ENCODE measurements at regions of chr14 and their contacts with region 1.

Region 1: DNA sequence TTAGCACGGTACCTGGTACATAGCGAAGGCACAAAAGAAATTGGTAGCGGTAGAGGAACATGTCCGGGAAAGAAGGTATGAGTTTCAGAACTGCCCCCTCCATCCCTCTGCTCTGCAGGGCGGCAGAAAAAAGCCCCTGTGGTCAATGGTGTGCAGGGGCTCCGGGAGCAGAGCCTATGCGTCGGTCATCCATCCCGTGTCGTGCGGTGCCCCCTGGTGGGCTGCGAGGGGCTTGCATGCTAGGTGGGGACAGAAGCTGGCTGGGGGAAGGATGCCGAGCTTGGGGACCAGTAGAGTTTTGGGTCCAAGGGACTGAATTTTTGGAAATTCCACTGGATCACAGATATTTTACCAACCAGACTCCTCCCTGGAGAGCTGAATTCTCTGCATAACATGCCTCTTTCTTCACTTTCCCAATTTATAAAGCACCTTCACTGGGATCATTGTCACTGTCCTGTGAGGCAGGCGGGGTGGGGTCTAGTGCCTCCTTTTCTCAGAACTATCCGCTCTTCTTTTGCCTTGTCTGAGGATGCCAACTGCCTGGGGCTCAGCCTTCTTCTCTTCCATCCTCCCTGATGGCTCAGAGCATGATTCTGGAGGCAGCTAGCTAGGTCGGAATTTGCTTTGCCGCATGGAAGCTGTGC is 148.7 kb downstream of the SMOC1 start:
- DNase-seq: peak in 8 of 9 donors; percentile 18 to 74 (median 38)
- ATAC-seq: peak; percentile 61
- H3K4me3 ChIP-seq: no peak overlapping the region
- H3K4me3 Mint-ChIP-seq: no peak overlapping the region
- H3K27ac ChIP-seq: no peak overlapping the region
- H3K27ac Mint-ChIP-seq: no peak overlapping the region
- H3K4me1 ChIP-seq: no peaks in the 10 kb centered on the region
- H3K4me1 Mint-ChIP-seq: peaks cover 0 to 4% (median 0%) of the 10 kb centered on the region in 7 donors
- H3K27me3 ChIP-seq: no peaks in the 10 kb centered on the region
- H3K27me3 Mint-ChIP-seq: peaks cover 3 to 7% (median 6%) of the 10 kb centered on the region in 5 donors

Region 2: DNA sequence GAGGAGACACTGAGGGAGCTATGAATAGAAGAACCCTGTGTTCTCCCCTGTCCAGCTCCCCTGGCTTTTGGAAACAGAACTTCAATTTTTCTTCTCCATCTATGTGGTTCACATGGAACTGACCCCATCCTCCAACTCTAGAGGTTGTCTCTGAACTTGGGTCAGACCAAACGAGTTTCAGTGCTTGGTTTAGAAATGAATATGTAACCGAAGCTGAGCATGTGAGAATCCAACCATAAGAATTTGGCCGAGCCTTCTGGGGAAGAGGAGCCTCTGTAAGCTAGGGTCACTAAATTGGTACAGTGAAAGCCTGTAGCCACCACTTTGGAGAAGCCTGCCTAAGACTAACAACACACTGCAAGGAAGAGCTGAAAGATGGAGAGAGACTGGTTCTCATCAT is 1699.4 kb before region 1 on chr14:
- CTCF ChIA-PET with region 1: no interaction called
- POLR2A ChIA-PET with region 1: no interaction called
- intact Hi-C with region 1: no loop called
- DNase-seq: no peak
- ATAC-seq: no peak
- H3K4me3 ChIP-seq: no peak overlapping the region
- H3K4me3 Mint-ChIP-seq: no peak overlapping the region
- H3K27ac ChIP-seq: no peak overlapping the region
- H3K27ac Mint-ChIP-seq: no peak overlapping the region
- H3K4me1 ChIP-seq: no peaks in the 10 kb centered on the region
- H3K4me1 Mint-ChIP-seq: peaks cover 0 to 9% (median 8%) of the 10 kb centered on the region in 7 donors
- H3K27me3 ChIP-seq: no peaks in the 10 kb centered on the region
- H3K27me3 Mint-ChIP-seq: no peaks in the 10 kb centered on the region

Region 3: DNA sequence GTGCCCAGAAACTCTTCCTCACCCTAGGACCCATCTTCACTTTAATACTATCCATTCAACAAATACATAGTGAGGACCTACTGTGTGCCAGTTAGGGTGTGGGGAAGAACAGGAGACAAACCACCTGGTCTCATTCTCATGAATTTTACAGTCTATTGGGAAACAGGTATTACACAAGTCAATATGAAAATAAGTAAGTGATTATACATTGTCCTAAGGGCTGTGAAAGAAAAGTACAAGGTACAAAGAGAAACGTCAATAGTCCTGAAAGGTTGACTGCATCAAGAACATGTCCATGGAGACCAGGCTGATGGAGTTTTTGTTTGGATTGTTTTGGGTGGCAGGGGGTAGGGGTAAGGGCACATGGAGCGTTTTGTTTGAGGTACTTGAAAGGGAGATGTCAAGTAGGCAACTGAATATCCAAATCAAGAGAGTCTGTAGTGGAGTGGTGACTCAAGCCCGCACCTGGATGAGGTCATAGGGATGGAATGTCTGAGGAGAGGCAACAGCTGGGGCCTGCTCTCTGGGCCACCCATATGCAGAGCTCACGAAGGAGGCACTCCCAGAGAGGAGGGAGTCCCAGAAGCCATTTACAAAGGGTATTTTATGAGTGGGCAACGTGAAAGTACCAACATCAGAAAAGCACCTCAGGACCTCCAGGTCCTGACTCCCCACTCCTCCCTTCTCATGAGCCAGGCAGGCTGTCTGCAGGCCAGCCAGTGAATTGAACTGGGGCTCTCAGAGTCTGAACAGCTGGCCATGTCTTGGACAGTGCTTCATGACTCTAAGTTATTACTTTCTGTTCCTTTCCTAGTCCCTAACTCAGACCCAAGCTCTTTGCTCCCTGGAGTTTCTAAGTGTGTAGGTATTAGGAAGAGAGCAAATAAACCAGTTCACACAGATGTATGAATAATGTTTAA is 1507.0 kb before region 1 on chr14:
- CTCF ChIA-PET with region 1: no interaction called
- POLR2A ChIA-PET with region 1: no interaction called
- intact Hi-C with region 1: no loop called
- DNase-seq: no peak
- ATAC-seq: no peak
- H3K4me3 ChIP-seq: no peak overlapping the region
- H3K4me3 Mint-ChIP-seq: no peak overlapping the region
- H3K27ac ChIP-seq: no peak overlapping the region
- H3K27ac Mint-ChIP-seq: peak overlapping the region in 3 of 9 donors; percentile 49 to 69 (median 66)
- H3K4me1 ChIP-seq: peaks cover 0 to 24% of the 10 kb centered on the region in 2 donors
- H3K4me1 Mint-ChIP-seq: peaks cover 5 to 52% (median 37%) of the 10 kb centered on the region in 7 donors
- H3K27me3 ChIP-seq: no peaks in the 10 kb centered on the region
- H3K27me3 Mint-ChIP-seq: no peaks in the 10 kb centered on the region

Region 4: DNA sequence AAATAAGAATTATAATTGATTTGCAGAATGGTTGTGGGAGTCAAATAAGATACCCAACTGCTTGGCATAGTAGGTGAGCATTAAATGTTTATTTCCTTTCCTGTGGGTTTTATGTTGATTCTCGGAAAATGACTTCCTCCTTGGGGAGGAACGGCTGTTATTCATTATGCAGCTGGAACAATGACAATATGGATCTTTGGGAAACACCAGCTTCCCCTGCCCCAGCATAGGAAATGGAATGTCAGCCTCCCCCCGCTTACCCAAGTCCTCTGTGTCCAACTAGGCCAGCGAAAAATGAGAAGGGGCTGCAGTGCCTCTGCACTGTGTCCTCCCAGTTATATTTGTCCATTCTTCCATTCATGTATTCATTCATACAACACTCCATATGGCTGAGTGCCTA is 441.5 kb before region 1 on chr14:
- CTCF ChIA-PET with region 1: no interaction called
- POLR2A ChIA-PET with region 1: no interaction called
- intact Hi-C with region 1: loop called (anchors 5 kb)
- DNase-seq: no peak
- ATAC-seq: no peak
- H3K4me3 ChIP-seq: no peak overlapping the region
- H3K4me3 Mint-ChIP-seq: no peak overlapping the region
- H3K27ac ChIP-seq: no peak overlapping the region
- H3K27ac Mint-ChIP-seq: no peak overlapping the region
- H3K4me1 ChIP-seq: no peaks in the 10 kb centered on the region
- H3K4me1 Mint-ChIP-seq: peaks cover 0 to 7% (median 0%) of the 10 kb centered on the region in 7 donors
- H3K27me3 ChIP-seq: no peaks in the 10 kb centered on the region
- H3K27me3 Mint-ChIP-seq: peaks cover 0 to 9% (median 0%) of the 10 kb centered on the region in 5 donors

Region 5: GRCh38 chr14:69879175-69880043 is 148.5 kb before region 1 on chr14 and contains the start of gene SMOC1:
- CTCF ChIA-PET with region 1: no interaction called
- POLR2A ChIA-PET with region 1: no interaction called
- intact Hi-C with region 1: loop called in 1 of 2 experiments (anchors 2 kb)
- DNase-seq: no peak
- ATAC-seq: no peak
- H3K4me3 ChIP-seq: no peak within 1 kb of the TSS
- H3K4me3 Mint-ChIP-seq: peak within 1 kb of the TSS in 2 of 10 donors; percentile 51 to 58
- H3K27ac ChIP-seq: no peak within 1 kb of the TSS
- H3K27ac Mint-ChIP-seq: no peak within 1 kb of the TSS
- H3K4me1 ChIP-seq: no peaks in the 10 kb centered on the region
- H3K4me1 Mint-ChIP-seq: peaks cover 0 to 7% (median 0%) of the 10 kb centered on the region in 7 donors
- H3K27me3 ChIP-seq: peaks cover 0 to 4% of the 10 kb centered on the region in 2 donors
- H3K27me3 Mint-ChIP-seq: peaks cover 43 to 71% (median 55%) of the 10 kb centered on the region in 5 donors
- total RNA-seq, gene SMOC1: 0.71 TPM in 1 of 5 experiments, not detected in the others

Region 6: GRCh38 chr14:69980457-69981425 is 47.2 kb before region 1 on chr14:
- CTCF ChIA-PET with region 1: no interaction called
- POLR2A ChIA-PET with region 1: no interaction called
- intact Hi-C with region 1: no loop called
- DNase-seq: no peak
- ATAC-seq: no peak
- H3K4me3 ChIP-seq: no peak overlapping the region
- H3K4me3 Mint-ChIP-seq: no peak overlapping the region
- H3K27ac ChIP-seq: no peak overlapping the region
- H3K27ac Mint-ChIP-seq: no peak overlapping the region
- H3K4me1 ChIP-seq: no peaks in the 10 kb centered on the region
- H3K4me1 Mint-ChIP-seq: no peaks in the 10 kb centered on the region
- H3K27me3 ChIP-seq: no peaks in the 10 kb centered on the region
- H3K27me3 Mint-ChIP-seq: peaks cover 13 to 40% (median 27%) of the 10 kb centered on the region in 5 donors

Region 7: GRCh38 chr14:70045844-70046535 is 18.1 kb after region 1 on chr14:
- CTCF ChIA-PET with region 1: no interaction called
- POLR2A ChIA-PET with region 1: no interaction called
- intact Hi-C with region 1: no loop called
- DNase-seq: no peak
- ATAC-seq: no peak
- H3K4me3 ChIP-seq: no peak overlapping the region
- H3K4me3 Mint-ChIP-seq: no peak overlapping the region
- H3K27ac ChIP-seq: no peak overlapping the region
- H3K27ac Mint-ChIP-seq: no peak overlapping the region
- H3K4me1 ChIP-seq: no peaks in the 10 kb centered on the region
- H3K4me1 Mint-ChIP-seq: no peaks in the 10 kb centered on the region
- H3K27me3 ChIP-seq: no peaks in the 10 kb centered on the region
- H3K27me3 Mint-ChIP-seq: peaks cover 10 to 25% (median 17%) of the 10 kb centered on the region in 5 donors

Measured in naive thymus-derived CD4-positive, alpha-beta T cell (primary cell).